Body of pancreas (tissue), 4 donors: ENCODE measurements at regions of chr4 and their contacts with region 1.

Region 1: GRCh38 chr4:157217708-157218107 is 2.8 kb upstream of the GRIA2 start:
- DNase-seq: no peak
- ATAC-seq: no peak
- H3K4me3 ChIP-seq: no peak overlapping the region
- H3K27ac ChIP-seq: no peak overlapping the region
- H3K4me1 ChIP-seq: peaks cover 14% of the 10 kb centered on the region
- H3K27me3 ChIP-seq: peaks cover 0 to 12% of the 10 kb centered on the region in 2 donors
- CTCF ChIP-seq: peak in 6 of 7 experiments; percentile 36 to 57 (median 51)
- POLR2A ChIP-seq: no peak

Region 2: GRCh38 chr4:157973297-157973696 is 755.6 kb after region 1 on chr4:
- intact Hi-C with region 1: loop called (anchors 5 kb)
- DNase-seq: no peak
- ATAC-seq: no peak
- H3K4me3 ChIP-seq: no peak overlapping the region
- H3K27ac ChIP-seq: no peak overlapping the region
- H3K4me1 ChIP-seq: no peaks in the 10 kb centered on the region
- H3K27me3 ChIP-seq: no peaks in the 10 kb centered on the region
- CTCF ChIP-seq: no peak
- POLR2A ChIP-seq: no peak